Cardiac septum (tissue), 1 donor: ENCODE measurements at regions of chr9 and their contacts with region 1.

Region 1: GRCh38 chr9:4750023-4750673 is 9.1 kb upstream of the AK3 start:
- DNase-seq: no peak

Region 2: GRCh38 chr9:3804103-3804502 is 946.0 kb before region 1 on chr9:
- intact Hi-C with region 1: no loop called
- DNase-seq: no peak

Region 3: GRCh38 chr9:4382722-4383317 is 367.3 kb before region 1 on chr9:
- intact Hi-C with region 1: loop called (anchors 10 kb)
- DNase-seq: no peak

Region 4: DNA sequence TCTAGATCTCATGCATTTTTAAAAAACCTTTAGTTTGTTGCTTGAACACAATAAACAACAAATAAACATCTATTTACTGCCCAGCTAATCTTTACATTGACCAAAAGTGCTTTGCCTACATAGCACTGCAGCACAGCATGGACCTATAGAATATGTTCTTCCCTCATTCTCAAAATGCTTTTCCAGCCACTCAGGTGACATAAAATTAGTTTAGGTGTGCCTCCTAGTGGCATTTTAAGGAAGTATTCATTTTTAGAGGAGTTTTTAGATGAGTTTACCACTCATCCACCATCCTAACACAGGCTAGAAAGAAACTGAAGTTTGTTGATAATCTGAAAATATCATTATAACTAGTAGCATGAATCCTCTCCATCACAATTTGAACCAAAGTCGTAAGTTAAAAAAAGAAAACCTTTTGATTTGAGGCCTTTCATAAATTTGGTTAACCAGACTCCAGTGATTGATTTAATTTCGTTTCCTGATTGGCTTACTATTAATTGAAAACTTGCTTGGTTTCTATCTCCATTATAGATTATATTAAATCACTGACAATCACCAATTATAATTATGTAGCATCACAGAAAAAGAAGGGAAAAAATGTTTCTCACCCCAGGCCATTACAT is 675.0 kb after region 1 on chr9:
- intact Hi-C with region 1: loop called (anchors 10 kb)
- DNase-seq: no peak